B cell (primary cell): ENCODE measurements at regions of chr19 and their contacts with region 1.

Region 1: DNA sequence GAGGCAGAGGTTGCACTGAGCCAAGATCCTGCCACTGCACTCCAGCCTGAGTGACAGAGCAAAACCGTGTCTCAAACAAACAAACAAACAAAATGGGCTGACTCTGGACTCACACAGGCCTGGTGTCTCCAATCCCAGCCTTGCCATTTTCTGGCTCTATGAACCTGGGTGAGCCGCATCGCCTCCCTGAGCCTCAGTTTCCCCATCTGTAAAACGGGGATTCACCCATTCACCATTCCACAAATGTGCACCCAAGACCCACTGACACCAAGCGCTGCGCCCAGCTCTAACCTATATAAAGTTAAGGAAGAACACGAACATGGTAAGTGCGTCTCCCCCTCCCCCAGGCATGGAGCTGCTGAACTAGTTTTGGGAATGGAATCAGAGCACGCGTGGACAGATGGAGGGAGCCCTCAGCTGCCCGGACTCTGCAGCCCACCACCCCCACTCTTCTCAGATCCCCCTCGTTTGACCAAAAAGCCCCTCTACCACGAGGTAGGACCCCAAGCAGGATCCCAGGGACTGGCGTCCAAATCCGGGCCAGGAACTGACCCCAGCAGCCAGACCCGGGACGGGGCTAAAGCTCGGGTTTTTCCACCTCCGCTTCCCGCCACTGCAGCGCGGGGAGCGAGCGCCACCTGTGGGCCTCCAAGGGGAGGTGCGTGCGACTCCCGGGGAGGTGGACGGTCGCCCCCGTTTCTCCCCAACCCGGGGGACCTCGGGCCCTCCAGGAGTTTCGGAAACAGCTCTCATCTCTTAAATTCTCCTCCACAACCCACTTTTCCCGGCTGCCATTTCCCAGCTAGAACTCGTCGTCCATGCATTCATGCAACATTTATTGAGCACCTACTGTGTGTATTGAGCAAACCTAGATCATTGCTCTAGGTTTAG is 33.0 kb upstream of the ADGRE5 start:
- DNase-seq: peak; percentile 73
- ATAC-seq: peak; percentile 77
- H3K4me3 ChIP-seq: peak overlapping the region in 3 of 5 experiments; percentile 27 to 34 (median 34)
- H3K4me3 Mint-ChIP-seq: peak overlapping the region; percentile 27
- H3K27ac ChIP-seq: no peak overlapping the region
- H3K27ac Mint-ChIP-seq: no peak overlapping the region
- H3K4me1 ChIP-seq: peaks cover 21 to 24% of the 10 kb centered on the region in 2 donors
- H3K4me1 Mint-ChIP-seq: peaks cover 22% of the 10 kb centered on the region
- H3K27me3 ChIP-seq: no peaks in the 10 kb centered on the region
- H3K27me3 Mint-ChIP-seq: no peaks in the 10 kb centered on the region
- CTCF ChIP-seq: peak; percentile 89

Region 2: GRCh38 chr19:14218620-14219330 is 129.5 kb before region 1 on chr19:
- CTCF ChIA-PET with region 1: interaction called, 17 read pairs
- POLR2A ChIA-PET with region 1: no interaction called
- intact Hi-C with region 1: loop called (anchors 5 kb)
- DNase-seq: no peak
- ATAC-seq: no peak
- H3K4me3 ChIP-seq: no peak overlapping the region
- H3K4me3 Mint-ChIP-seq: no peak overlapping the region
- H3K27ac ChIP-seq: no peak overlapping the region
- H3K27ac Mint-ChIP-seq: no peak overlapping the region
- H3K4me1 ChIP-seq: peaks cover 0 to 10% of the 10 kb centered on the region in 2 donors
- H3K4me1 Mint-ChIP-seq: peaks cover 10% of the 10 kb centered on the region
- H3K27me3 ChIP-seq: no peaks in the 10 kb centered on the region
- H3K27me3 Mint-ChIP-seq: no peaks in the 10 kb centered on the region
- CTCF ChIP-seq: no peak

Region 3: GRCh38 chr19:14248578-14249011 is 99.6 kb before region 1 on chr19:
- CTCF ChIA-PET with region 1: no interaction called
- POLR2A ChIA-PET with region 1: no interaction called
- intact Hi-C with region 1: no loop called
- DNase-seq: peak; percentile 51
- ATAC-seq: peak; percentile 50
- H3K4me3 ChIP-seq: peak overlapping the region in 4 of 5 experiments; percentile 57 to 76 (median 62)
- H3K4me3 Mint-ChIP-seq: peak overlapping the region; percentile 73
- H3K27ac ChIP-seq: peak overlapping the region in 1 of 2 donors; percentile 26
- H3K27ac Mint-ChIP-seq: peak overlapping the region; percentile 56
- H3K4me1 ChIP-seq: peaks cover 0 to 21% of the 10 kb centered on the region in 2 donors
- H3K4me1 Mint-ChIP-seq: peaks cover 14% of the 10 kb centered on the region
- H3K27me3 ChIP-seq: no peaks in the 10 kb centered on the region
- H3K27me3 Mint-ChIP-seq: no peaks in the 10 kb centered on the region
- CTCF ChIP-seq: no peak

Region 4: GRCh38 chr19:14337510-14337909 is 10.7 kb before region 1 on chr19:
- CTCF ChIA-PET with region 1: interaction called, 14 read pairs
- POLR2A ChIA-PET with region 1: interaction called, 3 read pairs
- intact Hi-C with region 1: no loop called
- DNase-seq: peak; percentile 51
- ATAC-seq: peak; percentile 54
- H3K4me3 ChIP-seq: no peak overlapping the region
- H3K4me3 Mint-ChIP-seq: no peak overlapping the region
- H3K27ac ChIP-seq: no peak overlapping the region
- H3K27ac Mint-ChIP-seq: no peak overlapping the region
- H3K4me1 ChIP-seq: peaks cover 6 to 7% of the 10 kb centered on the region in 2 donors
- H3K4me1 Mint-ChIP-seq: peaks cover 5% of the 10 kb centered on the region
- H3K27me3 ChIP-seq: peaks cover 0 to 3% (median 0%) of the 10 kb centered on the region in 4 experiments
- H3K27me3 Mint-ChIP-seq: no peaks in the 10 kb centered on the region
- CTCF ChIP-seq: no peak

Region 5: DNA sequence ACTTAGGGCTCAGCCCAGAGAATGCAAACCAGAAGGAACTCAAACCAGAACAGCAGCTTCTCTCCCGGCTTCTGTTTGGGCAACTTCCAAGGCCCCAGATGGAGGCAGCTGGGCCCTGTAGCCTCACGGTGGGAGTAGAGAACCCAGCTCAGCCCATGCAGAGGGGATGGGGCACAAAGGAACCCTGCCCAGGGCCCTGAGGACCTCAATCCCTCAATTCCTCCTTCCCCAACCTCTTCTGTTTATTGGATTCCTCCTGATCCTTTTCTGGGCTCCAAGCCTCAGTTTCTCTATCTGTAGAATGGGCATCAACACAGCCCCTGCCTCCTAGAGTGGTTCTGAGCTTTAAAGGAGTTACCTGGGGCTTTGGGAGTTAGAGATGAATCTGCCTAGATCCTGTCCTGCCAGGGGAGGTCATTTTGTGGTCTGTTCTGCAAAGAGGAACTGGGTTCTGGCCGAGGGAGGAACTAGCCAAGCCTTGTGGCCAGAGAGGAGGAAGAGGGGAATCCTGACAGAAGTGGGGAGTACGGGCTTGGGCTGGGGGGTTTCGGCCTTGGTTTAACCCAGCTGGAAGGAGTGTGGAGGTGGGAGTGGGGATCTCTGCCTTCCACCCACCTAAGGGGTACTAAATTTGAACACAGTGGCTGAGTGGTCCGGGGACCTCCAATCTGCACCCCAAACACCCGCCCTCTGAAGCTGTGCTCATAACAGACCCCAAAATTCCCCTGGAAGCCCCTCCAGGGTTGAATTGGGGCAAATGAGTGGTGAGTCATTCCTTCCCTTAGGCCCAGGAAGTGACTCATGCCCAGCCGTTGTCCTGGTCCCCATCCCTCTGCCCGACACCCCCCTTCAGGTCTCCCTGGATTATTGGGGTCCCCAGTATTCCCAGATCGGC is 35.7 kb after region 1 on chr19:
- CTCF ChIA-PET with region 1: interaction called, 27 read pairs
- POLR2A ChIA-PET with region 1: interaction called, 7 read pairs
- intact Hi-C with region 1: no loop called
- DNase-seq: peak; percentile 68
- ATAC-seq: peak; percentile 12
- H3K4me3 ChIP-seq: peak overlapping the region; percentile 19 to 90 (median 39)
- H3K4me3 Mint-ChIP-seq: peak overlapping the region; percentile 85
- H3K27ac ChIP-seq: peak overlapping the region; percentile 97 to 99
- H3K27ac Mint-ChIP-seq: peak overlapping the region; percentile 89
- H3K4me1 ChIP-seq: peaks cover 48 to 70% of the 10 kb centered on the region in 2 donors
- H3K4me1 Mint-ChIP-seq: peaks cover 51% of the 10 kb centered on the region
- H3K27me3 ChIP-seq: no peaks in the 10 kb centered on the region
- H3K27me3 Mint-ChIP-seq: no peaks in the 10 kb centered on the region
- CTCF ChIP-seq: no peak